Activated B cell treated with CpG ODN at 0.5 μM for 24 hours (primary cell): ENCODE measurements at regions of chr4 and their contacts with region 1.

Region 1: GRCh38 chr4:138680989-138681604 is 334.5 kb upstream of the NOCT start:
- DNase-seq: peak; percentile 38
- ATAC-seq: peak; percentile 45
- H3K4me3 Mint-ChIP-seq: no peak overlapping the region
- H3K27ac Mint-ChIP-seq: peak overlapping the region; percentile 30
- H3K4me1 Mint-ChIP-seq: no peaks in the 10 kb centered on the region
- H3K27me3 Mint-ChIP-seq: peaks cover 12% of the 10 kb centered on the region
- CTCF ChIP-seq: peak; percentile 91

Region 2: GRCh38 chr4:136864580-136865185 is 1816.4 kb before region 1 on chr4:
- CTCF ChIA-PET with region 1: no interaction called
- POLR2A ChIA-PET with region 1: no interaction called
- intact Hi-C with region 1: loop called (anchors 2 kb)
- DNase-seq: no peak
- ATAC-seq: no peak
- H3K4me3 Mint-ChIP-seq: no peak overlapping the region
- H3K27ac Mint-ChIP-seq: no peak overlapping the region
- H3K4me1 Mint-ChIP-seq: no peaks in the 10 kb centered on the region
- H3K27me3 Mint-ChIP-seq: no peaks in the 10 kb centered on the region
- CTCF ChIP-seq: no peak

Region 3: DNA sequence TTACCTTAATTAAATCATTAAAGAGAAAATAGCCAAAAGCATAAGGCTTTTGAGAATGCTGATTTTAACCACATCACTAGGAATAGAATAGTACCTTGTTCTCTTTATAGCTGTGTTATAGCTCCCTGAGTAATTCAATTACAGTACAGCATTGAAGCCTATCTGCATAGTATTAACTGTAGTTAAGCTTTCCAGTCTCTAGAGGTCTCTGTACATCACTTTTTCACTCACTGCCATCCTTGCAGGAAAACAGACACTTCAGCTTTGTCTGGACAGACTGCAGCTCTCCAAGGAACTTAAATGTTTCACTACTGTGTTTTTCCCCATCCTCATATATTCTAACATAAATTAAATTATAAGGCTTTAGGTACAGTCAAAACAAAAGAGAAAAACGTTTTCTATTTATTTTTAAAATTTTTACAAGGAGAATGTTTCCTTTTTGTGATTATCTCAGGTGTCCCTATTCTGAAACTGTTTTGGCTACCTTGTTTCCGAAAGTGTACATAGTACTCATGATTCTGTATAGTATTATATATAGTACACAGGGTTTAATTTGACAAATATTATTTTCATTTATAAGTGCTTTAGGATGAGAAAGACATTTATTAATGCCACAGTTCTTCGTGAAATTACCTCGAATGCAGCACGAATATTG is 1556.7 kb before region 1 on chr4:
- CTCF ChIA-PET with region 1: no interaction called
- POLR2A ChIA-PET with region 1: no interaction called
- intact Hi-C with region 1: loop called (anchors 5 kb)
- DNase-seq: no peak
- ATAC-seq: no peak
- H3K4me3 Mint-ChIP-seq: no peak overlapping the region
- H3K27ac Mint-ChIP-seq: no peak overlapping the region
- H3K4me1 Mint-ChIP-seq: no peaks in the 10 kb centered on the region
- H3K27me3 Mint-ChIP-seq: no peaks in the 10 kb centered on the region
- CTCF ChIP-seq: no peak

Region 4: GRCh38 chr4:138035781-138036258 is 645.3 kb before region 1 on chr4:
- CTCF ChIA-PET with region 1: interaction called, 12 read pairs
- POLR2A ChIA-PET with region 1: no interaction called
- intact Hi-C with region 1: loop called (anchors 1 kb)
- DNase-seq: peak; percentile 19
- ATAC-seq: peak; percentile 100
- H3K4me3 Mint-ChIP-seq: no peak overlapping the region
- H3K27ac Mint-ChIP-seq: peak overlapping the region; percentile 52
- H3K4me1 Mint-ChIP-seq: peaks cover 11% of the 10 kb centered on the region
- H3K27me3 Mint-ChIP-seq: peaks cover under 1% of the 10 kb centered on the region
- CTCF ChIP-seq: no peak

Region 5: GRCh38 chr4:138090150-138090917 is 590.8 kb before region 1 on chr4:
- CTCF ChIA-PET with region 1: no interaction called
- POLR2A ChIA-PET with region 1: no interaction called
- intact Hi-C with region 1: loop called (anchors 1 kb)
- DNase-seq: no peak
- ATAC-seq: peak; percentile 61
- H3K4me3 Mint-ChIP-seq: no peak overlapping the region
- H3K27ac Mint-ChIP-seq: no peak overlapping the region
- H3K4me1 Mint-ChIP-seq: no peaks in the 10 kb centered on the region
- H3K27me3 Mint-ChIP-seq: peaks cover 9% of the 10 kb centered on the region
- CTCF ChIP-seq: peak; percentile 25

Region 6: GRCh38 chr4:138182838-138183426 is 498.2 kb before region 1 on chr4:
- CTCF ChIA-PET with region 1: no interaction called
- POLR2A ChIA-PET with region 1: no interaction called
- intact Hi-C with region 1: loop called (anchors 2 kb)
- DNase-seq: no peak
- ATAC-seq: peak; percentile 28
- H3K4me3 Mint-ChIP-seq: no peak overlapping the region
- H3K27ac Mint-ChIP-seq: no peak overlapping the region
- H3K4me1 Mint-ChIP-seq: no peaks in the 10 kb centered on the region
- H3K27me3 Mint-ChIP-seq: peaks cover 3% of the 10 kb centered on the region
- CTCF ChIP-seq: no peak

Region 7: DNA sequence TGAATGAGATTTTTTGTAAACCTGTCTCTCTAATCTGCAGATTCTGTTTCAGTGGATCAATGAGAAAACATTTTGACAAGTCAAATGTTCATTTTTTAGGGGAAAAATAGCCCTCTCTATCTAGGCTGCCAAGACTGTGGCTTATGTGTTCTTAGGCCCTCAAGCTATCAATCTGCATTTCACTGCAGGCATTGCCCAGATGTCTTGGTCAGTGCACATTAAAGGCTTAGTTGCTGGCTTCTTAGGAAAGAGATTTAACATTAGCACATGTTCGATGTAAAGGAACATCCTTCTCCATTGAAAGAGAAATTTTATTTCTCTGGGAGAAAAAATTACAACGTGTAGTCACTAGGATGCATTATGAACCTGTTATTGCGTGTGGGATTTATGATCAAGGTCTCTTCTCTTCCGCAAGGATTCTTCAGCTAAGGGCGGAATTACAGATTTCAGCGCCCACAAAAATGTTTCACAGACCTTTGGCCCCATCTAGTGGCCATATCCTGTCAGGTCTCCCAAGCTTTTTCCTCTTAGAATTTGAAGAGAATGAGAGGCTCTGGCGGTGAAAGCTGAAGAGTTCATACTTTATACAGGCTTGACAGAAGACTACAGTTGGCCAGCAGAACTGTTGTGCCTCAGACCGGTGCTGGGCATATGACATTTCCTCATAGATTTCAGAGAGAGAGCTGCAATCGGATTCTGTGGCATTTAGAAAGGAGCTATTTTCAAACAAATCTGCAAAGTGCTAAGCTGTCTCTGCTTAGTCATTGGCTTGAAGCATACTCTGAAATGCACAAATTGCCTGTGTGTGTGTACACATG is 189.8 kb after region 1 on chr4:
- CTCF ChIA-PET with region 1: interaction called, 10 read pairs
- POLR2A ChIA-PET with region 1: no interaction called
- intact Hi-C with region 1: no loop called
- DNase-seq: no peak
- ATAC-seq: no peak
- H3K4me3 Mint-ChIP-seq: no peak overlapping the region
- H3K27ac Mint-ChIP-seq: no peak overlapping the region
- H3K4me1 Mint-ChIP-seq: peaks cover 2% of the 10 kb centered on the region
- H3K27me3 Mint-ChIP-seq: peaks cover 20% of the 10 kb centered on the region
- CTCF ChIP-seq: peak; percentile 89